CD14-positive monocyte (primary cell): ENCODE measurements at regions of chr16 and their contacts with region 1.

Region 1: DNA sequence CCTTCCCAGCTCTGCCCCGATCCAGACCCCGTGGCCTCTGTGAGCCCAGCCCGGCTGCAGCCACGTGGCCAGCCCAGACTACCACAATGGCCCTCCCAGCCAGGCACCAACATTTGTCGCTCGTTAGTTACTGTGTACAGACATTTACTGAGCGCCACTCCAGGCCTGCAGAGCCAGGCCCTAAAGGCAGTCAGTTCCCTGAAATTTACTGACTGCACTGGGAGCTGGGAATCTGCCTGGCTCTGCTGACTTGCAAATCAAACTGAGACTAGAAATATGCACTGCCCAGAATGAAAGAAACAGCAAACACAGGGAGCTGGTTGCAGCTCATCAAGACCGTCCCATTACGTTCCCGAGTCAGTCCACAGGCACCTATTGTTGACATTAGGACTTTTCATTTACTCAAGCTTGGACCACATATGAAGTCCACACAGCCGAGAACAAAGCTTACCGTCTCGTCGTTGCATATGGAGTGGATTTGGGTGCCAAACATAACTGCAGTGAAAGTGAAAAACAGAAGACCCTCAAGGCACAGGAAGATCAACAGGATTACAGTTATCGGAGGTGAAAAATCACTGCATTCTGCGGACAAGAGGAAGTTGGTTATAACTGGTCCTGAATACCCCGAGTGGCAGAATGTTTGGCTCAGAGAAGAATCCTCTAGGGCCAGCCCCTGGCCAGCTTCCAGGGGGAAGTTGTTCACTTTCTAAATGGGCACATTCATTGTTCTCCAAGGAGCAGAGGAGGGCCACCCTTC is 34.5 kb downstream of the ZDHHC7 start:
- DNase-seq: peak in 2 of 3 donors; percentile 44 to 52
- H3K4me3 ChIP-seq: peak overlapping the region in 1 of 3 experiments; percentile 18
- H3K4me3 Mint-ChIP-seq: peak overlapping the region in 1 of 2 donors; percentile 56
- H3K27ac ChIP-seq: peak overlapping the region in 1 of 2 donors; percentile 71
- H3K27ac Mint-ChIP-seq: peak overlapping the region; percentile 36 to 87 (median 72)
- H3K4me1 ChIP-seq: peaks cover 38 to 47% of the 10 kb centered on the region in 2 donors
- H3K4me1 Mint-ChIP-seq: peaks cover 46% of the 10 kb centered on the region
- H3K27me3 ChIP-seq: no peaks in the 10 kb centered on the region
- H3K27me3 Mint-ChIP-seq: peaks cover 0 to 2% (median 1%) of the 10 kb centered on the region in 3 donors
- CTCF ChIP-seq: no peak

Region 2: GRCh38 chr16:84919269-84919668 is 57.6 kb before region 1 on chr16:
- intact Hi-C with region 1: no loop called
- DNase-seq: no peak
- H3K4me3 ChIP-seq: no peak overlapping the region
- H3K4me3 Mint-ChIP-seq: no peak overlapping the region
- H3K27ac ChIP-seq: no peak overlapping the region
- H3K27ac Mint-ChIP-seq: no peak overlapping the region
- H3K4me1 ChIP-seq: peaks cover 3 to 26% of the 10 kb centered on the region in 2 donors
- H3K4me1 Mint-ChIP-seq: peaks cover 26% of the 10 kb centered on the region
- H3K27me3 ChIP-seq: peaks cover 0 to 7% of the 10 kb centered on the region in 2 donors
- H3K27me3 Mint-ChIP-seq: peaks cover 14 to 22% (median 20%) of the 10 kb centered on the region in 3 donors
- CTCF ChIP-seq: no peak

Region 3: DNA sequence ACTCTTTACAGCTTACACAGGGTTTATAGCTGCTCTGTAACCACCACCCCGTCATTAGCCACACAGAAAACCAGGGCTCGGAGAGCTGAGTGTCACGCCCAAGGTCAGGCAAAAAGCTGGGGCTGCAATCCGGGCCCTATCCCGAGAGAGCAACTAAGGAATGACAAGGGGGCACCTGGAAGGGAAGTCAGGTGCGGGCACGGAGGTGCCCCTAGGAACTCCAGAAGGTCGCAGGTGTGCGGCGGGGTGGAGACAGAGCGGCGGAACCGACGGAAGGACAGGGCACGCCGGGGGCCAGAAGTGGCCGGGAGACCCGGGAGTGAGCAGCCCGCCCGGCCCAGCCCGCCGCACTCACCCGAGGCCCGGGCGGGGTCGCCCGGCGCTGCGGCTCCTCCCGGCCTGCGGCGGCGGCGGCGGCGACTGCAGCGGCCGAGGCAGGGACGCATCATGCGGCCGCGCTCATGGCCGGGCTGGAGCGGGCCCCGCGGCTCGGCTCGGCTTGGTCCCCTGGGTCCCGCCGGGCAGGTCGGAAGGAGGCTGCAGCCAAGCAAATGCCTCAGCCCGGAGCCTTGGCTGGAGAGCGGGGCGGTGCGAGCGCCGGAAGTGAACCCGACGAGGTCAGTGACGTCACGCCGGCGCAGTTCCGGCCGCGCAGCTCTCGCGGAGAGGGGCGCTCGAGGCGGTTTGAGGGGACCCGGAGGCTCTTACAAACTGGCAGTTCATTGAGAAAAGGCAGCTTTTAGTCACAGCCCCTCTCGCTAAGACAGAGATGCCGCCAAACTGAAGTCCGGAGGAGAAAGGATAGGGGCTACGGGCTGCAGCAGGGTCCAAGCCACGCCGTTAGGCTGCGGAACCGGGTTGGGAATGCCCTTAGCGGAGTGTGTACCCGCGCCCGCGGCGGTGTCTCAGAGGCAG is 34.4 kb after region 1 on chr16 and contains the start of gene ZDHHC7:
- intact Hi-C with region 1: loop called in 1 of 2 experiments (anchors 5 kb)
- DNase-seq: peak; percentile 80 to 86 (median 82)
- H3K4me3 ChIP-seq: peak within 1 kb of the TSS; percentile 94 to 99 (median 96)
- H3K4me3 Mint-ChIP-seq: peak within 1 kb of the TSS; percentile 97 to 99
- H3K27ac ChIP-seq: peak within 1 kb of the TSS; percentile 91 to 93
- H3K27ac Mint-ChIP-seq: peak within 1 kb of the TSS; percentile 99 to 100 (median 100)
- H3K4me1 ChIP-seq: peaks cover 86 to 87% of the 10 kb centered on the region in 2 donors
- H3K4me1 Mint-ChIP-seq: peaks cover 79% of the 10 kb centered on the region
- H3K27me3 ChIP-seq: no peaks in the 10 kb centered on the region
- H3K27me3 Mint-ChIP-seq: peaks cover 0 to 2% (median 1%) of the 10 kb centered on the region in 3 donors
- CTCF ChIP-seq: no peak
- polyA plus RNA-seq, gene ZDHHC7: 99.7 to 189 (median 129) TPM